CD4-positive, alpha-beta T cell (primary cell): ENCODE measurements at regions of chr11 and their contacts with region 1.

Region 1: GRCh38 chr11:119101759-119102423 is at the start of gene DPAGT1:
- DNase-seq: peak; percentile 73 to 92 (median 78)
- ATAC-seq: peak; percentile 84
- H3K4me3 ChIP-seq: peak within 1 kb of the TSS; percentile 90
- H3K4me3 Mint-ChIP-seq: peak within 1 kb of the TSS; percentile 95
- H3K27ac ChIP-seq: peak within 1 kb of the TSS; percentile 83 to 95
- H3K27ac Mint-ChIP-seq: peak within 1 kb of the TSS; percentile 97
- H3K4me1 ChIP-seq: peaks cover 35% of the 10 kb centered on the region
- H3K4me1 Mint-ChIP-seq: peaks cover 51% of the 10 kb centered on the region
- H3K27me3 ChIP-seq: no peaks in the 10 kb centered on the region
- H3K27me3 Mint-ChIP-seq: no peaks in the 10 kb centered on the region
- CTCF ChIP-seq: no peak
- total RNA-seq, gene DPAGT1: 9.5 to 11.7 TPM

Region 2: GRCh38 chr11:118572061-118572980 is 529.6 kb before region 1 on chr11 and contains the start of gene ARCN1:
- CTCF ChIA-PET with region 1: no interaction called
- POLR2A ChIA-PET with region 1: interaction called, 5 read pairs
- intact Hi-C with region 1: loop called in 1 of 2 experiments (anchors 10 kb)
- DNase-seq: peak; percentile 64 to 91 (median 75)
- ATAC-seq: peak; percentile 81
- H3K4me3 ChIP-seq: peak within 1 kb of the TSS; percentile 88
- H3K4me3 Mint-ChIP-seq: peak within 1 kb of the TSS; percentile 99
- H3K27ac ChIP-seq: peak within 1 kb of the TSS; percentile 97 to 98
- H3K27ac Mint-ChIP-seq: peak within 1 kb of the TSS; percentile 94
- H3K4me1 ChIP-seq: peaks cover 20% of the 10 kb centered on the region
- H3K4me1 Mint-ChIP-seq: peaks cover 52% of the 10 kb centered on the region
- H3K27me3 ChIP-seq: no peaks in the 10 kb centered on the region
- H3K27me3 Mint-ChIP-seq: no peaks in the 10 kb centered on the region
- CTCF ChIP-seq: no peak
- total RNA-seq, gene ARCN1: 73.7 to 78.6 TPM

Region 3: DNA sequence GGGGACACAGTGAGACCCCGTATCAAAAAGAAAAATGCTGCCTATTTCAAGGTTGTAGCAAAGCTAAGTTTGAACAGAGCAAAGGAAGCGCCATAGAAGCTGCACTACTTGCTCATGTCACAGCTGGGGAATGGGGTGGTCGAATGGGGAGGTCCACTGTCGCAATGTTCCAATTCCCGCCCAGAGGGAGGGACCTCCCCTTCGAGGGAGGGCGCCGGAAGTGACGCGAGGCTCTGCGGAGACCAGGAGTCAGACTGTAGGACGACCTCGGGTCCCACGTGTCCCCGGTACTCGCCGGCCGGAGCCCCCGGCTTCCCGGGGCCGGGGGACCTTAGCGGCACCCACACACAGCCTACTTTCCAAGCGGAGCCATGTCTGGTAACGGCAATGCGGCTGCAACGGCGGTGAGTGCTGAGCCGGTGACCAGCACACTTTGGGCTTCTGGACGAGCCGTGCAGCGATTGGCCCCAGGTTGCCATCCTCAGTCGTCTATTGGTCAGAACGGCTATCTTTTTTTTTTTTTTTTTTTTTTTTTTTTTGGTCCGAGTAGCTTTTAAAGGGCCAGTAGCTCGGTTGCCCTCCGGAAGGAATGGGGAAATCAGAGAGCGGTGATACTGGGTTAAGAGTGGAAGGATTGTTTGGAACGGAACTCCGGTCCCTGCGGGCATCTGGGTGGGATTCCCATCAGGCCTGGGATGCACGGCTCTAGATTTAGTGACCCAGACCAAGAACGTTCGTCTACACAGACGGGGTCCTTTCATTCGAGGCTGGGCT is 17.0 kb before region 1 on chr11 and contains the start of gene HMBS:
- CTCF ChIA-PET with region 1: interaction called, 4 read pairs
- POLR2A ChIA-PET with region 1: interaction called, 30 read pairs
- intact Hi-C with region 1: loop called (anchors 1 to 2 kb)
- DNase-seq: peak; percentile 70 to 96 (median 88)
- ATAC-seq: peak; percentile 94
- H3K4me3 ChIP-seq: peak within 1 kb of the TSS; percentile 79
- H3K4me3 Mint-ChIP-seq: peak within 1 kb of the TSS; percentile 92
- H3K27ac ChIP-seq: peak within 1 kb of the TSS; percentile 74 to 81
- H3K27ac Mint-ChIP-seq: peak within 1 kb of the TSS; percentile 88
- H3K4me1 ChIP-seq: peaks cover 26% of the 10 kb centered on the region
- H3K4me1 Mint-ChIP-seq: peaks cover 25% of the 10 kb centered on the region
- H3K27me3 ChIP-seq: no peaks in the 10 kb centered on the region
- H3K27me3 Mint-ChIP-seq: no peaks in the 10 kb centered on the region
- CTCF ChIP-seq: no peak
- total RNA-seq, gene HMBS: 3.4 to 4.1 TPM

Region 4: GRCh38 chr11:119121008-119121810 is 19.3 kb after region 1 on chr11 and contains the start of gene HINFP:
- CTCF ChIA-PET with region 1: interaction called, 4 read pairs
- POLR2A ChIA-PET with region 1: interaction called, 59 read pairs
- intact Hi-C with region 1: loop called in 1 of 2 experiments (anchors 1 kb)
- DNase-seq: peak; percentile 99 to 100 (median 100)
- ATAC-seq: peak; percentile 96
- H3K4me3 ChIP-seq: peak within 1 kb of the TSS; percentile 92
- H3K4me3 Mint-ChIP-seq: peak within 1 kb of the TSS; percentile 91
- H3K27ac ChIP-seq: peak within 1 kb of the TSS; percentile 75 to 76
- H3K27ac Mint-ChIP-seq: peak within 1 kb of the TSS; percentile 85
- H3K4me1 ChIP-seq: peaks cover 29% of the 10 kb centered on the region
- H3K4me1 Mint-ChIP-seq: peaks cover 47% of the 10 kb centered on the region
- H3K27me3 ChIP-seq: no peaks in the 10 kb centered on the region
- H3K27me3 Mint-ChIP-seq: no peaks in the 10 kb centered on the region
- CTCF ChIP-seq: no peak
- total RNA-seq, gene HINFP: 17.6 to 20.5 TPM

Region 5: DNA sequence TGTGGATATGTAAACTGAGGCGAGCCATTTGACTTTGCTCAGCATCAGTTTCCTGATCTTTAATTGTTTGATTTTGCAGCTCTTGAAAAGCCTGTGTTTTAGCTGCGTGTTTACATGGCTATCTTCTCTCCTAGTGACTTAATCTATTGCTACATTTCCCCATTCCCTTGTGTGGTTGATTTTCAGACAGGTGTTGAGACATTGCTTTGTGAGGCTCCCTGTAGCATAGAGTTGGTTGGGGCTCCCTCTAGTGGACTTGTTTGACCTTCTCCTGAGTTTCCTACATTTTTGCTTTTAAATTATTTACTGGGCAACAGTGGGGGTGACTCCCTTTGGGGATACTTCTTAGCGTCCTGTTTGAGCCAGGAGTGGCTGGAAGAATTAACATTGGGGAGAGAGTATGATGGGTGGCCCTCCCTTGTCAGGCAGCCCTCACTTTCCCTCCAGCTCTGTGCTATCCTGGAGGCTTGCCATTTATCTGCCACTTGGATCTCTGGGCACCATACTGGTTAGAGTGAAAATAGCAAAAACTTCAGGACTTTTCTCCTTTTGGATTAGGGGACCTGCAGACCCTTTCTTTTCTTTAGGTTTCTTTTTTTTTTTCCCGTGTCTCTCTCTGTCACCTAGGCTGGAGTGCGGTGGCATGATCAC is 95.1 kb after region 1 on chr11:
- CTCF ChIA-PET with region 1: interaction called, 5 read pairs
- POLR2A ChIA-PET with region 1: no interaction called
- intact Hi-C with region 1: loop called in 1 of 2 experiments (anchors 10 kb)
- DNase-seq: peak; percentile 36 to 90 (median 64)
- ATAC-seq: peak; percentile 99
- H3K4me3 ChIP-seq: no peak overlapping the region
- H3K4me3 Mint-ChIP-seq: no peak overlapping the region
- H3K27ac ChIP-seq: no peak overlapping the region
- H3K27ac Mint-ChIP-seq: no peak overlapping the region
- H3K4me1 ChIP-seq: no peaks in the 10 kb centered on the region
- H3K4me1 Mint-ChIP-seq: peaks cover 5% of the 10 kb centered on the region
- H3K27me3 ChIP-seq: no peaks in the 10 kb centered on the region
- H3K27me3 Mint-ChIP-seq: no peaks in the 10 kb centered on the region
- CTCF ChIP-seq: peak; percentile 85

Region 6: DNA sequence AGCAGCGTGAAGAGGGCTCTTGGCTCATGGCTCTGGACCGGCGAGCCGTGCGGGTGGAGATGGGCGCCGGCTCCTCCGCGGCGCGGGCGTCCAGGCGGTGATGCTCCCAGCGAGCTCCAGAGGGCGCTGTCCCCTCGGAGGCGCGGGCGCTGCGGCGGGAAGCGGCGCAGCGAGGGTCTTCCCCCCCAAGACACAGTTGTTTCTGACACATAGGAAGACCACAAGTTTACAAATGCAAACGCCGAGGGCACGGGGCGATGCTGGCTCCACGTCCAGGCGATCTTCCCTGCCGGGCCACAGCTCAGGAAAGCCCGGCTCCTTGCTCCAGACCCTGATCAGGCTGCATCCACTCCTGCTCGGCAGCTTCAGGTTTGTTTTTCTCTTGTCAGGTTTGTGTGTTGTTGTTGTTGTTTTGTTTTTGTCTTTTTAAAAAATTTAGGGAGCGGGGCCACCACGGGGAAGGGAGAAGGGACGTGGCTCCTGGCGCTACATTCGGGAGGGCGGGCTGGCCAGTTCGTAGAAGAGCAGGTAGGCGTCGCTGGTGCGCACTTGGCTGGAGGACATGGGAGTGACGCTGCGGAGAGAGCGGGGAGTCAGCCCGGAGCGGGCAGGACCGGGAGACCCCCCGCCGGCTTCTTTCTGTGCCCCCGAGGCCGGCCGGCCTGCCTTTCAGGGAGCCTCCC is 254.6 kb after region 1 on chr11:
- CTCF ChIA-PET with region 1: no interaction called
- POLR2A ChIA-PET with region 1: no interaction called
- intact Hi-C with region 1: no loop called
- DNase-seq: peak; percentile 52 to 87 (median 68)
- ATAC-seq: peak; percentile 94
- H3K4me3 ChIP-seq: peak overlapping the region; percentile 62
- H3K4me3 Mint-ChIP-seq: peak overlapping the region; percentile 89
- H3K27ac ChIP-seq: no peak overlapping the region
- H3K27ac Mint-ChIP-seq: peak overlapping the region; percentile 52
- H3K4me1 ChIP-seq: peaks cover 14% of the 10 kb centered on the region
- H3K4me1 Mint-ChIP-seq: peaks cover 5% of the 10 kb centered on the region
- H3K27me3 ChIP-seq: peaks cover 4 to 17% of the 10 kb centered on the region in 2 experiments
- H3K27me3 Mint-ChIP-seq: peaks cover 40% of the 10 kb centered on the region
- CTCF ChIP-seq: peak; percentile 99